PC-9 (cell line): ENCODE measurements at regions of chr11 and their contacts with region 1.

Region 1: GRCh38 chr11:706957-707816 is 1.2 kb downstream of the EPS8L2 start:
- DNase-seq: peak; percentile 81
- H3K4me3 ChIP-seq: peak overlapping the region; percentile 84
- H3K27ac ChIP-seq: peak overlapping the region; percentile 81
- H3K4me1 ChIP-seq: peaks cover 17% of the 10 kb centered on the region
- H3K27me3 ChIP-seq: no peaks in the 10 kb centered on the region
- CTCF ChIP-seq: no peak

Region 2: DNA sequence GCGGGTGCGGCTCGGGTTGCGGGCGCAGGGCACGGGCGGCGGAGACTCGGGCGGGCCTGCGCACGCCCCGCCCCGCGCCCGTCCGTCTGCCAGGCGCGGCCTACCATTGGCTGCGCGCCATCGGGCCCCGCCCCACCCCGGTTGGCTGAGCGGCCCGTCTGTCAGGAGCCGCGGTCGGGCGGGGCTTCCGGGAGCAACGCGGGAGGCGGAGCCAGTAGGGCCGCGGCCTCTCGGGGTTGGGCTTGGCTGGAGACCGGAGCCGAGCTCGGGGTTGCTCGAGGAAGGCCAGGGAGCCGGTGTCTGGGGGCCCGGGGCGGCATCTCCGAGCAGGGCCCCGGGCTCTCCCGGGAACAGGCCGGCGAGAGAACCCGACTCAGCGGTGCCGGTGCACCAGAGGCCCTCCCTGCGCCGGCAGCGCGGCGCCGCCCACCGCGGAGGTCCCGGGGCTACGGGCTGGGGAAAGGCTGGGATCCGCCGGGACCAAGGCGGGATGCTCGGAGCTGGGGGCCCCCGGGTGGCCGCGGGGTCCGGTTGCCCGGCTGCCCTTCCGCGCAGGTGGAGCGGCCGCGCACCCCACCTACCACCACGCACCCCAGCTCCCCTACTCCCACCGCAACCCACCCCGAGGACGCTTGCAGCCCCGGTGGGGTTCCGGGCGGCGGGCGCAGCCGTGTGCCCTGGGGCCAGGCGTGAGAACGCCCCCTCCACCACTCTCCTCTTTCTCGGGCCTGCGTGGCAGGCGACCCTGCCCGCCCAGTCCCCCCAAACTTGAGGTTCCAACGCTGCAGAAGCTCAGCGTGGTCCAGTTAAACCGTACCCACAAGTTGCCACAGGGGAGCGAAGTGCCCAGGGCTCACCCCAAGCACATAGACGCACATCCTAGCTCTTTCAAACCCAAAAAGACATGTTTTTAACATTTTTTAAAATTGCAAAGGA is 171.4 kb before region 1 on chr11 and contains the start of gene HRAS:
- CTCF ChIA-PET with region 1: no interaction called
- POLR2A ChIA-PET with region 1: no interaction called
- intact Hi-C with region 1: no loop called
- DNase-seq: peak; percentile 74 to 95
- H3K4me3 ChIP-seq: peak within 1 kb of the TSS; percentile 89
- H3K27ac ChIP-seq: peak within 1 kb of the TSS; percentile 76
- H3K4me1 ChIP-seq: no peaks in the 10 kb centered on the region
- H3K27me3 ChIP-seq: no peaks in the 10 kb centered on the region
- CTCF ChIP-seq: no peak
- total RNA-seq, gene HRAS: 47.2 and 47.5 TPM in 2 replicates

Region 3: GRCh38 chr11:695538-696248 is 11.5 kb before region 1 on chr11 and contains the start of gene TMEM80:
- CTCF ChIA-PET with region 1: interaction called, 5 read pairs
- POLR2A ChIA-PET with region 1: interaction called, 8 read pairs
- intact Hi-C with region 1: loop called (anchors 1 kb)
- DNase-seq: peak; percentile 83 to 95
- H3K4me3 ChIP-seq: peak within 1 kb of the TSS; percentile 79
- H3K27ac ChIP-seq: peak within 1 kb of the TSS; percentile 99
- H3K4me1 ChIP-seq: peaks cover 27% of the 10 kb centered on the region; the same call in 1 of the 2 replicates
- H3K27me3 ChIP-seq: no peaks in the 10 kb centered on the region
- CTCF ChIP-seq: no peak
- total RNA-seq, gene TMEM80: 34.0 and 36.6 TPM in 2 replicates

Region 4: GRCh38 chr11:747158-748006 is 40.2 kb after region 1 on chr11 and contains the start of gene TALDO1:
- CTCF ChIA-PET with region 1: no interaction called
- POLR2A ChIA-PET with region 1: no interaction called
- intact Hi-C with region 1: loop called (anchors 2 kb)
- DNase-seq: peak; percentile 65 to 89
- H3K4me3 ChIP-seq: peak within 1 kb of the TSS; percentile 87
- H3K27ac ChIP-seq: peak within 1 kb of the TSS; percentile 96
- H3K4me1 ChIP-seq: peaks cover 11% of the 10 kb centered on the region
- H3K27me3 ChIP-seq: no peaks in the 10 kb centered on the region
- CTCF ChIP-seq: no peak
- total RNA-seq, gene TALDO1: 434 and 446 TPM in 2 replicates

Region 5: GRCh38 chr11:762421-763072 is 55.4 kb after region 1 on chr11:
- CTCF ChIA-PET with region 1: no interaction called
- POLR2A ChIA-PET with region 1: interaction called, 4 read pairs
- intact Hi-C with region 1: loop called (anchors 1 kb)
- DNase-seq: peak; percentile 83 to 93
- H3K4me3 ChIP-seq: peak overlapping the region; percentile 28; the same call in 1 of the 2 replicates
- H3K27ac ChIP-seq: peak overlapping the region; percentile 90
- H3K4me1 ChIP-seq: peaks cover 30% of the 10 kb centered on the region
- H3K27me3 ChIP-seq: no peaks in the 10 kb centered on the region
- CTCF ChIP-seq: peak; percentile 50; the same call in 1 of the 2 replicates